Activated CD4-positive, alpha-beta T cell treated with anti-CD3 and anti-CD28 coated beads for 36 hours (primary cell): ENCODE measurements at regions of chr2 and their contacts with region 1.

Region 1: GRCh38 chr2:240832205-240832727 is 12.2 kb upstream of the KIF1A start:
- DNase-seq: peak; percentile 98
- ATAC-seq: peak; percentile 96
- H3K4me3 Mint-ChIP-seq: peak overlapping the region; percentile 63
- H3K27ac Mint-ChIP-seq: no peak overlapping the region
- H3K4me1 Mint-ChIP-seq: peaks cover 2% of the 10 kb centered on the region
- H3K27me3 Mint-ChIP-seq: peaks cover 19% of the 10 kb centered on the region

Region 2: GRCh38 chr2:240586198-240586918 is 245.9 kb before region 1 on chr2 and contains the start of gene CAPN10:
- CTCF ChIA-PET with region 1: no interaction called
- POLR2A ChIA-PET with region 1: no interaction called
- intact Hi-C with region 1: loop called (anchors 1 kb)
- DNase-seq: peak; percentile 98
- ATAC-seq: peak; percentile 91
- H3K4me3 Mint-ChIP-seq: peak within 1 kb of the TSS; percentile 87
- H3K27ac Mint-ChIP-seq: peak within 1 kb of the TSS; percentile 85
- H3K4me1 Mint-ChIP-seq: peaks cover 38% of the 10 kb centered on the region
- H3K27me3 Mint-ChIP-seq: no peaks in the 10 kb centered on the region
- total RNA-seq, gene CAPN10: 22.1 to 30.2 TPM

Region 3: GRCh38 chr2:240819858-240820606 is 12.2 kb before region 1 on chr2 and contains the start of gene KIF1A:
- CTCF ChIA-PET with region 1: no interaction called
- POLR2A ChIA-PET with region 1: no interaction called
- intact Hi-C with region 1: loop called in 1 of 2 experiments (anchors 1 kb)
- DNase-seq: peak; percentile 44
- ATAC-seq: peak; percentile 49
- H3K4me3 Mint-ChIP-seq: peak within 1 kb of the TSS; percentile 60
- H3K27ac Mint-ChIP-seq: no peak within 1 kb of the TSS
- H3K4me1 Mint-ChIP-seq: peaks cover 6% of the 10 kb centered on the region
- H3K27me3 Mint-ChIP-seq: peaks cover 42% of the 10 kb centered on the region
- total RNA-seq, gene KIF1A: 4.6 to 8.2 TPM

Region 4: DNA sequence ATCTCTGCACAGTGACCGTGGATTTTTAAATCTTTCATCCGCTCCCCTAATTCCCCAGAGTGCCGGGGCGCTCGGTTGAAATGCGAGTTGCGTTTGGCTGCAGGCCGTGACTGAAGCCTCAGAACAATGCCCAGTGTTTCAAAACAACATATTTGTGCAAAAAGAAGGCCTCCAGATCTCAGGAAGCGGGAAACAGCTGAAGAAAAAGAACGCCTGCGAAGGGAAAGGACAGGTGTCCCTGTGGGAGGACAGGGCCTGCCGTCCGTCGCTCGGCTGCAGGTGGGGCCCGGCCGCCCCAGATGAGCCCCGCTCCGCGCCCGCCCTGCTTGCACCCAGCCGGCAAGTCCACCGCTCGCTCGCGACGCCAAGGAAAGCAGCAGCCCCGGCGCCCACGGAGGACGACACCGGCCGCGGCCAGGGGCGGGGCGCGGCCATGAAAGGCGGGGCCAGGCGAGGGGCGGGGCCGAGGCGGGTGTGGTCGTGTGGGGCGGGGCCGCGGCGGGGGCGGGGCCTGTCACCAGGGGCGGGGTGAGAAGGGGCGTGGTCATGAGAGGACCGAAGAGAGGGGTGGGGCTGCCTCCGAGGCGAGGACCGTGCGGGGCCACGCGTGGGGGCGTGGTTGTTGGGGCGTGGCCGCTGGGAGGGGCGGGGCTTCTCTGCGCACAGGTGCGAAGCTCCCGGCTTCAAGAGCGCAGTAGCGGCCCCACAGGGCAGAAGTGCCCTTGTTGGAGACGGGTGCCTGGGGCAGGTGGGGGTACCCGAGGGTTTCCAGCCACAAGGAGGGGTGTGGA is 708.7 kb after region 1 on chr2:
- CTCF ChIA-PET with region 1: no interaction called
- POLR2A ChIA-PET with region 1: no interaction called
- intact Hi-C with region 1: loop called in 1 of 2 experiments (anchors 2 kb)
- DNase-seq: peak; percentile 90
- ATAC-seq: peak; percentile 92
- H3K4me3 Mint-ChIP-seq: peak overlapping the region; percentile 31
- H3K27ac Mint-ChIP-seq: no peak overlapping the region
- H3K4me1 Mint-ChIP-seq: peaks cover 4% of the 10 kb centered on the region
- H3K27me3 Mint-ChIP-seq: peaks cover 14% of the 10 kb centered on the region

Region 5: DNA sequence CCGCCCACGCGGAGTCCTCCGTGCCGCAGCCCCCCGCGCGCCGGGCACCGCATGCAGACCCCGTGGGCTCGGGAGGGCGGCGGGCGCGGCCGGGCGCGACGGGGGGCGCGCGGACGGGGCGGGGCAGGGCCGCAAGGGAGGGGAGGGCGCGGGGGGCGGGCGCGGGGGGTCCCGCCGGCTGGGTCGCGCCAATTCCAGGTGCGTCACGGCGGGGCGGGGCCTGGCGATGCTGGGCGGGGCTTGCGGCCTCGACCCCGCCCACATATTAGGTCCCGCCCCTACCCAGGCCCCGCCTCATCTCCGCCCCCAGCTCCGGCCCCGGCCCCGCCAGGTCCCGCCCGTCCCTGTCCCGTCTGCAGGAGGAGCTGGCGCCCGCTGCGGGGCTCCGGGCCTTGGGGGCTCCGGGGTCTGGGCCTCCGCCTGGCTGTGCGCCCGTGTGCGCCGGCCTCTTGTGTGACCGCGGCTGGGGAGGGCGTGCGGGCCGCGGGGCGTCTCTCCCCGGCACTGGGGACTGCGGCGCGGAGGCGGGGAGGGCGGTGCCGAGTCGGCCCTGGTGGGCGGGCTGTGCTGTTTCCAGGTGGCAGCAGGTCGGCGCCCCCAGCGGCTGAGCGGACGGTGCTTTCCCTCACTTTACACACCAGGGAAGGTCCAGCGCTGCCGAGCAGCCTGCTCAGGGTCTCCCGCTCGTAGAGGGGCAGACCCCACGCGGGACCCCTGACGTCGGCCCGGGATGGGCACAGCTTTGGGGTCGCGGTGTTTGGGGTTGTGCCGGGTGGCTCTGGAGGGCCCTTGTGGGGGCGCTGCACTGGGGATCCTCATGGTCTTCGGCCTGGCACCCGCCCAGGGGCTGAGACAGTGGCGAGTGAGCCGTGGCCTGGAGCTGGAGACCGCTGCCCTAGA is 870.1 kb after region 1 on chr2:
- CTCF ChIA-PET with region 1: no interaction called
- POLR2A ChIA-PET with region 1: no interaction called
- intact Hi-C with region 1: loop called in 1 of 2 experiments (anchors 1 kb)
- DNase-seq: peak; percentile 94
- ATAC-seq: peak; percentile 70
- H3K4me3 Mint-ChIP-seq: peak overlapping the region; percentile 86
- H3K27ac Mint-ChIP-seq: peak overlapping the region; percentile 75
- H3K4me1 Mint-ChIP-seq: peaks cover 29% of the 10 kb centered on the region
- H3K27me3 Mint-ChIP-seq: no peaks in the 10 kb centered on the region